G401 (cell line): ENCODE measurements at regions of chr3 and their contacts with region 1.

Region 1: GRCh38 chr3:172179680-172180399 is 140.5 kb downstream of the FNDC3B start:
- DNase-seq: no peak

Region 2: DNA sequence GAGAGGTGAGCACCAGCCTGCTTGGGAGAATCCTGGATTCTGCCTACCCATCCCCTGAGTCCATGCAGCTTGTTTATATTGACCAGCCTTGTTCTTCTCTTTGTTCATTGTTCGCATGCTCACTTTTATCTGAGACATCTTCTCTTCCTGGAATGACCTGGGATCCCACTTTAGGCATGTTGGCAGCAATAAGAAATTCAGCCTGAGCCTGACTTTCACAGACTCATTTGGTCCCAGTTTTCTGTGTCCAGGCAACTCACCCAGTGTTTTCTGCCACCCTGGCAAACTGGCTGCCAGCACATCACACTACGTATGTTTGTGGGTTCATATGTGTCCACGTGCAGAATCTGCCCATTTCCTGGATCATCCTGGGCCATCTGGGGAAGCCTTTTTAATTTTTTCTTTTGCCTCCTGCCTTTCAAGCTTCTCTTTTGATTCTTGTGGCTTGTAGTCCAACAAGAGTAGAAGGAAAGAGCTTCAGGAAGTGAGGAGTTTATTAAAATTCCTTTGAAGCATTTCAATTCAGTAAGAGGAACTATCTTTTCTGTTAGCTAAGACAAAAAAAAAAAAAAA is 59.5 kb after region 1 on chr3:
- in situ Hi-C with region 1: loop called (anchors 5 kb)
- DNase-seq: no peak

Region 3: DNA sequence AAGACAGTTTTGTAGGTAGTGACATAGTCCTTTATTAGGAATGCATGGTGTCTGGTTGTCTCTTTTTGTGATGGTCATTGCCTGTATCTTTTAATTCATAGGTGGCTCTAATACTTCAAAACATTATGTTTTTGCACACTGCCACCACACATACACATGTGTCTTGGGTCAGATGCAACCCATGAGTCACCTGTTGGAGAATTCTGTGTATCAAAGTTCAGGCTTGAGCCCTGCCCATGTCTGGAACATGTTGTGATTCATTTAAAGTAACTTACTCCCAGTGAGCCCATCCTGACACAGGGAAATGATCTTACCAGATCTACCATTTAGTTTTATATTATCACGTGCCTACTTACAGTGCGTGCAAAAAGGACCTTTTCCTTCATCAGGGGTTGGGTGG is 125.7 kb after region 1 on chr3:
- in situ Hi-C with region 1: no loop called
- DNase-seq: no peak